AG04450 (cell line): ENCODE measurements at regions of chr6 and their contacts with region 1.

Region 1: DNA sequence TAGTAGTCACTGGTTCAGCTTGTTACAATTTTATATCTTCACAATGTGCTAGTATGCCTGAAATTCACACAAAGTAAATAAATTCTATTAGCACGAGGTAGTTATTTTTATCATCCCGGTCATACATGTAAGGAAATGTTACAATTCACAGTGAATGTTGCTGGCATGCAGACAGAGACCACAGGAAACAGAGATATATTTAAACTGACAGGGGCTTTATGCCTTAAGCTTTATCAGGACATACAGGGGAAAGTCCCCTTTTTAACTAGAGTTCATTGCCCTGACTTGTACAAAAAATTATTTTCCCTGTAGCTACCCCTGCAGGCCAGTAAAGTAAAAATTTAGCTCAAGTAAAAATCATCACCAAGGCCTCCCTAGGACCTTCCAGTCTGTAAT is 712.0 kb upstream of the NRSN1 start:
- DNase-seq: peak; percentile 74
- H3K4me3 ChIP-seq: no peak overlapping the region
- H3K27ac ChIP-seq: no peak overlapping the region
- H3K27me3 ChIP-seq: no peaks in the 10 kb centered on the region
- CTCF ChIP-seq: peak; percentile 62

Region 2: DNA sequence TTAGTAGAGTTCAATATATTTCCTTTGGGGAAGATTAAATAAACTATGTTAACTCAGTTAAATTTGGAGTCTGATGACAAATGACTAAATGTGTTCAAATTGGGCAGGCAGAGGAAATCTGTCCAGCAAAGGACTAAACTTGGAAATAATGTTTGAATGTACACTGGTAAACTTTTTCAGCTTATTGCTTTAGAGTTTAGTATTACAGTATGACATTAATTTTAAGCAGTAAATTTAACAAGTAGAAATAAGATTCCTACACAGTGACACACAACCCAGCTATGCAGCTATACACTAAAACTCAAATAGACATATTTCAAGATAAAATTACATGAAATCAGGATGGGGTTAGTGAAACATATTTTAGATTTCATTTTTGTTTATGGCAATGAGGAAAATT is 887.3 kb before region 1 on chr6:
- CTCF ChIA-PET with region 1: interaction called, 17 read pairs
- POLR2A ChIA-PET with region 1: no interaction called
- DNase-seq: no peak
- H3K4me3 ChIP-seq: no peak overlapping the region
- H3K27ac ChIP-seq: no peak overlapping the region
- H3K27me3 ChIP-seq: no peaks in the 10 kb centered on the region
- CTCF ChIP-seq: no peak

Region 3: GRCh38 chr6:23601811-23602340 is 187.8 kb after region 1 on chr6:
- CTCF ChIA-PET with region 1: no interaction called
- POLR2A ChIA-PET with region 1: no interaction called
- DNase-seq: no peak
- H3K4me3 ChIP-seq: no peak overlapping the region
- H3K27ac ChIP-seq: no peak overlapping the region
- H3K27me3 ChIP-seq: no peaks in the 10 kb centered on the region
- CTCF ChIP-seq: no peak